Transverse colon (tissue), 4 donors: ENCODE measurements at regions of chr2 and their contacts with region 1.

Region 1: DNA sequence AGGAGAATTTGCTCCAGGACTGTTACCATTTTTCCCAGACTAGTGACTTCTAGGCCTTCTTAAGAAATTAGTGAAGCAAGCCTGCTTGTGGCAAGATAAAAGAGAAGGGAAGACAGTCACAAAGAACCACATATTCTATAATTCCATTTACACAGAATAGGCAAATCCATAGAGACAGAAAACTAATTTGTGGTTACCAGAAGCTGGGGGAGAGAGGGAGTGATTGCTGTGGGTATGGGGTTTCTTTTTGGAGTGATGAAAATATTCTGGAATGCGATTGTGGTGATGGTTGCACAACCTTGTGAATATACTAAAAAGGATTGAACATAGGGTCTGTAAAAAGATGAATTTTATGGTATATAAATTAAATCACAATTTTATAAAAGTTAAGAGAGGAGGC is 37.5 kb upstream of the SIX2 start:
- DNase-seq: no peak
- H3K4me3 ChIP-seq: no peak overlapping the region
- H3K27ac ChIP-seq: no peak overlapping the region
- H3K4me1 ChIP-seq: peaks cover 0 to 6% (median 0%) of the 10 kb centered on the region in 4 donors
- H3K27me3 ChIP-seq: peaks cover 11% of the 10 kb centered on the region
- CTCF ChIP-seq: no peak
- EP300 ChIP-seq: no peak
- POLR2A ChIP-seq: no peak

Region 2: DNA sequence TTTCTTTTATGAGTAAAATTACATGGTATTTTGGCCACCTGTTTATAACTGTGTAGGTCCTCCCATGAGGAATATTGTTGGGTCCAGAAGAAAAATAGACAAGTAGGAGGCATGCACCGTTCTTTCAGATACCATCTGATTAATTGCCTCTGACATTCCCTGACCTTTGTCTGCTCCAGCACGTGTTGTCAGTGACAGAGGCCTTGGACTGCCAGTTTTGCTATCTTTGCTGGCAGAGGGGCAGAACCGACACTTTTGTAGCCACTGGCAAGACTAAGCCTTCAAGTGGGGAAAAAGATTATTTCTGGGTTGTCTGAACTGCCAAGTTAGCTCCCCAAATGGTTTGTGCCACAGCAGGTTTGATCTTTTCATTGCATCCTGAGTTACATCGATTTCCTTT is 408.1 kb before region 1 on chr2:
- in situ Hi-C with region 1: no loop called
- intact Hi-C with region 1: no loop called
- DNase-seq: no peak
- H3K4me3 ChIP-seq: no peak overlapping the region
- H3K27ac ChIP-seq: no peak overlapping the region
- H3K4me1 ChIP-seq: no peaks in the 10 kb centered on the region
- H3K27me3 ChIP-seq: no peaks in the 10 kb centered on the region
- CTCF ChIP-seq: no peak
- EP300 ChIP-seq: no peak
- POLR2A ChIP-seq: no peak

Region 3: GRCh38 chr2:44686561-44686960 is 360.2 kb before region 1 on chr2:
- in situ Hi-C with region 1: no loop called
- intact Hi-C with region 1: no loop called
- DNase-seq: no peak
- H3K4me3 ChIP-seq: no peak overlapping the region
- H3K27ac ChIP-seq: no peak overlapping the region
- H3K4me1 ChIP-seq: no peaks in the 10 kb centered on the region
- H3K27me3 ChIP-seq: no peaks in the 10 kb centered on the region
- CTCF ChIP-seq: no peak
- EP300 ChIP-seq: no peak
- POLR2A ChIP-seq: no peak

Region 4: GRCh38 chr2:44753552-44754285 is 293.1 kb before region 1 on chr2:
- in situ Hi-C with region 1: no loop called
- intact Hi-C with region 1: no loop called
- DNase-seq: no peak
- H3K4me3 ChIP-seq: no peak overlapping the region
- H3K27ac ChIP-seq: no peak overlapping the region
- H3K4me1 ChIP-seq: no peaks in the 10 kb centered on the region
- H3K27me3 ChIP-seq: no peaks in the 10 kb centered on the region
- CTCF ChIP-seq: no peak
- EP300 ChIP-seq: no peak
- POLR2A ChIP-seq: no peak

Region 5: DNA sequence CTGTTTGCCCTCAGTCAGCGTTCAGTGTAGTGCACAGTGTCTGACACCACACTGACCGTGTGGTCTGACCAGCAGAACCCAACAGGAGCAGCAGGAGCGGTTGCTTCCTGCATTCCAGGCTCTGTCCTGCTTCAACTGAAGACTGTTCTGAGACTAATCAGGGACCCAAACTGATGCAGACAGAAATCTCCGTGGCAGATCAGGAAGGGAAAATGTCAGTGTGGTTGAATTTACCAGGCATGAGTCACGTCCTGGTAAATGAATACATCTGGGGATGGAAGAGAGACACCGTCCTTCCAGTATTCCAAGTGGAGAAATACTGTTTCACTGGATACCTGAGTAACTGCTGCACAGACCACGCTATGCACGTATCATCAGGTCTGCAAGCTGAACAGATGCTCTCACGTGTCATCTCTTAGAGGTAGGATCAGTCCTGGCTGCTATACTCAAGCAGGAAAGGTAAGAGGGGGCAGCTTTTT is 1026.8 kb after region 1 on chr2:
- in situ Hi-C with region 1: no loop called
- intact Hi-C with region 1: loop called (anchors 10 kb)
- DNase-seq: no peak
- H3K4me3 ChIP-seq: no peak overlapping the region
- H3K27ac ChIP-seq: peak overlapping the region; percentile 17 to 36 (median 26)
- H3K4me1 ChIP-seq: peaks cover 0 to 10% (median 0%) of the 10 kb centered on the region in 4 donors
- H3K27me3 ChIP-seq: no peaks in the 10 kb centered on the region
- CTCF ChIP-seq: no peak
- EP300 ChIP-seq: no peak
- POLR2A ChIP-seq: no peak